GM12878 (cell line): ENCODE measurements at regions of chr15 and their contacts with region 1.

Region 1: GRCh38 chr15:20340931-20341661 is 200.5 kb downstream of the GOLGA6L6 start:
- DNase-seq: no peak
- ATAC-seq: no peak
- H3K4me3 ChIP-seq: no peak overlapping the region
- H3K27ac ChIP-seq: no peak overlapping the region
- H3K4me1 ChIP-seq: no peaks in the 10 kb centered on the region
- H3K27me3 ChIP-seq: no peaks in the 10 kb centered on the region
- CTCF ChIP-seq: no peak
- EP300 ChIP-seq: no peak
- POLR2A ChIP-seq: no peak
- RAD21 ChIP-seq: no peak

Region 2: GRCh38 chr15:20672469-20672868 is 331.4 kb after region 1 on chr15:
- CTCF ChIA-PET with region 1: no interaction called
- POLR2A ChIA-PET with region 1: no interaction called
- RAD21 ChIA-PET with region 1: no interaction called
- SMC1A ChIA-PET with region 1: no interaction called
- in situ Hi-C with region 1: no loop called
- intact Hi-C with region 1: no loop called
- DNase-seq: no peak
- ATAC-seq: no peak
- H3K4me3 ChIP-seq: no peak overlapping the region
- H3K27ac ChIP-seq: no peak overlapping the region
- H3K4me1 ChIP-seq: no peaks in the 10 kb centered on the region
- H3K27me3 ChIP-seq: no peaks in the 10 kb centered on the region
- CTCF ChIP-seq: no peak
- EP300 ChIP-seq: no peak
- POLR2A ChIP-seq: no peak
- RAD21 ChIP-seq: no peak

Region 3: DNA sequence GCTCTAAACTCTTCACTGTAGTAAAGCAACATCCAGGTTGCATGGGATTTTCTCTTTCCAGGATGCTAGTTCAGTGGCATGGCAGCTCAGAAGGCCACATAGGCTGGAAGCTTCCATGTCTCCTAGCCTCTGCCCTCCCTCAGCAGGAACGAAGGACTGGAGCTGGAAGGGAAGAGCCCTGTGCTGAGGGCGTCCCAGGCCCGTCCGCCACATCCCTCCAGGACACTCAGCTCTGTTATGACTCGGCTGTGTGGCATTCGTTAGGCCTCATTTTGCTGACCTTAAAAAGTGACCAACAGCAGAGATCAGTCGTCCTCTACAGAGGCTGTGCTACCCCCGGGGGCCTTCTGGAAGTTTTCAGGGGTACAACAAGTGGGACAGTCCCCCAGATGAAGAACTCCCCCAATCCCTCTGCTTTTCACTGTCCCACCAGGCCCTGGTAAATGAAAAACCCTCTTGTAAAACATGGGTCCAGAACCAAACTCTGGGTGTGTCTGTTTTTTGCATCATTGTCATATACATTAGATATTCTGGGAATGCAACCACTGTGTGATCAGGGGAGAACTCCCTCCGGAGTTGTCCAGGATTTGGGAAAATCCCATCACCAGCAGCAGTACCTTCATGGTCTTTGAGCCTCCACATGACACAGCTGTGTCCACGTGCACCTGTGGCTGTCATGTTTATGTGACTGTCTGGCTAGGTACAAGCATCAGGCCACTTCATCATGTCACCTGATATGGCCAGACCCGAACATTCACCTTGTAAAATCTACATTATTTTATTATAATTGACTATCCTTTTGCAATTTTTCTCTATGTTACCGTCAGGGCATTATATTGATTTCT is 1889.1 kb after region 1 on chr15:
- CTCF ChIA-PET with region 1: no interaction called
- POLR2A ChIA-PET with region 1: no interaction called
- RAD21 ChIA-PET with region 1: no interaction called
- SMC1A ChIA-PET with region 1: no interaction called
- in situ Hi-C with region 1: loop called (anchors 10 kb)
- intact Hi-C with region 1: no loop called
- DNase-seq: no peak
- ATAC-seq: no peak
- H3K4me3 ChIP-seq: no peak overlapping the region
- H3K27ac ChIP-seq: no peak overlapping the region
- H3K4me1 ChIP-seq: no peaks in the 10 kb centered on the region
- H3K27me3 ChIP-seq: no peaks in the 10 kb centered on the region
- CTCF ChIP-seq: no peak
- EP300 ChIP-seq: no peak
- POLR2A ChIP-seq: no peak
- RAD21 ChIP-seq: no peak